HepG2 (cell line): ENCODE measurements at regions of chr22 and their contacts with region 1.

Region 1: GRCh38 chr22:27581688-27582087 is 219.9 kb downstream of the MN1 start:
- DNase-seq: no peak
- ATAC-seq: no peak
- H3K4me3 ChIP-seq: no peak overlapping the region
- H3K27ac ChIP-seq: no peak overlapping the region
- H3K4me1 ChIP-seq: no peaks in the 10 kb centered on the region
- H3K27me3 ChIP-seq: peaks cover 0 to 48% of the 10 kb centered on the region in 2 experiments
- CTCF ChIP-seq: no peak
- EP300 ChIP-seq: no peak
- POLR2A ChIP-seq: no peak
- RAD21 ChIP-seq: no peak

Region 2: GRCh38 chr22:27642104-27642800 is 60.6 kb after region 1 on chr22:
- CTCF ChIA-PET with region 1: no interaction called
- POLR2A ChIA-PET with region 1: no interaction called
- in situ Hi-C with region 1: loop called (anchors 10 kb)
- intact Hi-C with region 1: no loop called
- DNase-seq: peak; percentile 20
- ATAC-seq: peak; percentile 43
- H3K4me3 ChIP-seq: peak overlapping the region in 1 of 3 experiments; percentile 42; a peak in 1 of 6 replicates
- H3K27ac ChIP-seq: no peak overlapping the region
- H3K4me1 ChIP-seq: peaks cover 61% of the 10 kb centered on the region
- H3K27me3 ChIP-seq: peaks cover 0 to 6% of the 10 kb centered on the region in 2 experiments; a peak in 1 of 5 replicates
- CTCF ChIP-seq: no peak
- EP300 ChIP-seq: no peak
- POLR2A ChIP-seq: no peak
- RAD21 ChIP-seq: no peak